GM10248 (cell line): ENCODE measurements at regions of chr14 and their contacts with region 1.

Region 1: DNA sequence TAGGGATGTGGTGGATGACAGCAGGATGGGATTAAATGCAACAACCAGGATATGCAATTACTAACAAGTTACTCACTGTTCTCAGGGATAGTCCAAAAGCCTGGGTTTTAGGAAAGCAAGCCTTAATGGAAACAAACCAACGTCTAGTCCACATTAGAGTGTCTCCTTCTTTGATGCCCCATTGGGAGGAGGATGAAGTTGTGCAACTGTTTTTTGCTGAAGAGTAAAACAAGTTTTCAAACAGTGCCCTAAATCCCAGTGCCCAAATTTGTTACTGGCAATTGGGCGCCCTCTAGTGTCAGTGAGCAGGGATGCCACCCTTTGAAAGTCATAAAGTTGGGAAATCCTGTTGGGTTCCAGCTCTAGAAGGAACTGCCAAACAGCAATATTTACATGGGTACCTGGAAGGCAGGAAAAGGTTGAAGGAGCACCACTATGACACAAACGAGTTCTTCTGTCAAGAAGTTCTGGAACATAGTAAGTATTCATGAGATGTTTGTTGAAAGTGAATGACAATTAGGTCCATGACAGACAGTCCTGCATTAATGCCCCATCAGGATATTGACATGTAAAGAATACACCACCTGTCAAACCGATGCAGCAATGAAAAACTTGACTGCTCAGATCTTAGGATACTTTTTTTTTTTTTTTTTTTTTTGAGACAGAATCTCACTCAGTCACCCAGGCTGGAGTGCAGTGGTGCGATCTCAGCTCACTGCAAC is 11.1 kb upstream of the DPF3 start:
- DNase-seq: peak; percentile 59
- CTCF ChIP-seq: peak; percentile 89

Region 2: DNA sequence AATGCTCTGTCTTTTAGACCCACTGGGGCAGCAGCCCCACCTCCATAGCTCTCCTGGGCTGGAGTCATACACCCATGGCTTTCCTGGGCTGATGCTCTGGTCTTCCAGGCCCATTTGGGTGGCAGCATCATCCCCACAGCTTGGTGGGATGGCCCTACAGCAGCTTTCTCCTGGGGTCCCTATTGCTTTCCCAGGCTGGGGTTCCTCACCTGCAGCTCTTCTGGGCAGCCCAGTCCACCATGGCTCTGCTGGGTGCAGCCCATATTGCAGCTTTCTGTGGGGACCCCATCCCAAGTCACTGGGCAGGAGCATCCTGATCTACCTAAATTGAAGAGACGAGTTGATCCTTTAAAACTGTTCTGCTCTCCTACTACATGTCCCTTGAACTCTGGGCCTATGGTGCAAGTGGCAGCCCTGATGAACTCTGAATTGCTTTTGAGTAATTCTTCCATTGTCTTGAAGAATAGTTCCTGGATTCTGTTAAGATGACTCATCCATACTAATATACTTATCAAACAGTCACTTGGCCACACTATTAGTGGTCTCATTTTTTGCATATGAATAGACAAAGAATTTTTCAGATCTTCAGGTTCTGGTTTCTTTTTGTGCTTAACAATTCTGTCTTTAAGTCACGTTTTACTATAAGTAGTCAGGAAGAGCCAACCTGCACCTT is 401.2 kb before region 1 on chr14:
- CTCF ChIA-PET with region 1: interaction called, 18 read pairs
- POLR2A ChIA-PET with region 1: no interaction called
- DNase-seq: no peak
- CTCF ChIP-seq: no peak

Region 3: GRCh38 chr14:72510566-72510965 is 394.4 kb before region 1 on chr14:
- CTCF ChIA-PET with region 1: interaction called, 295 read pairs
- POLR2A ChIA-PET with region 1: interaction called, 3 read pairs
- DNase-seq: no peak
- CTCF ChIP-seq: no peak

Region 4: GRCh38 chr14:72812292-72812911 is 92.6 kb before region 1 on chr14:
- CTCF ChIA-PET with region 1: no interaction called
- POLR2A ChIA-PET with region 1: no interaction called
- DNase-seq: no peak
- CTCF ChIP-seq: no peak

Region 5: GRCh38 chr14:72888636-72889201 is 16.3 kb before region 1 on chr14:
- CTCF ChIA-PET with region 1: interaction called, 53 read pairs
- POLR2A ChIA-PET with region 1: no interaction called
- DNase-seq: no peak
- CTCF ChIP-seq: no peak

Region 6: DNA sequence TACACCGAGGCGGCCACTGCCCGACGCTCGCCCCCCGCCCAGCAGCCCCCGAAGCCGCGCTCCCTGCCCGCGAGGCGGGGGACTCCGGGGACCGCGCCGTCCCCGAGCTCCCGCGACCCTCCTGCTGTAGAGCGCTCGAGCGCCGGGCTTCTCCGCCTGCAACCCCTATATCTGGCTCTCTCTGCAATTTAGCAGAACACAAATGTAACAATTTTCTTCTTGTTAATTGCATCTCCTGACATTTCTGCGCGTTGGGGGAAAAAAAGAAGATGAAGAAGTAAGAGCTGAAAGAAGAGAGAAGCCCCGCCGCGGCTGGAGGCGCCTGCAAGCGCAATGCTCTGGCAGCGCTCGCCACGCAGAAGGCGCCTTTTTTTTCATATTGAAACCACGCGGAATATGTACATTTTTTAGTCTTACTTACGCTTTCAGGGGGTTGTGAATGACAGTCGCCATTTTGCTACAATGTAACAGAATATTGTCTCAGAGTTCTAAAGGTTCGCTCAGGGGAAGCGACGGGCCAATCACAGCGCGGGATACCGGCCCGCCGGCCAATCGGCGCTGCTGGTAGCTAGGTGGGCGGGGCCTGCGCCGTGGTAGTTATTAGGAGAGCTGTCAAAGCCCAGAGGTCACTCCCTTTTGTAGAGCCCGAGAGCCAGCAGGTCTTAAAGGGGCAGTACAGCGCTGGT is 11.2 kb before region 1 on chr14 and contains the start of gene DPF3:
- CTCF ChIA-PET with region 1: interaction called, 53 read pairs
- POLR2A ChIA-PET with region 1: no interaction called
- DNase-seq: peak; percentile 96
- CTCF ChIP-seq: no peak

Region 7: GRCh38 chr14:72920015-72920414 is 15.0 kb after region 1 on chr14:
- CTCF ChIA-PET with region 1: interaction called, 18 read pairs
- POLR2A ChIA-PET with region 1: no interaction called
- DNase-seq: no peak
- CTCF ChIP-seq: no peak

Region 8: GRCh38 chr14:73209953-73210352 is 305.0 kb after region 1 on chr14:
- CTCF ChIA-PET with region 1: no interaction called
- POLR2A ChIA-PET with region 1: no interaction called
- DNase-seq: no peak
- CTCF ChIP-seq: no peak

Region 9: GRCh38 chr14:73227812-73228781 is 323.1 kb after region 1 on chr14:
- CTCF ChIA-PET with region 1: no interaction called
- POLR2A ChIA-PET with region 1: no interaction called
- DNase-seq: no peak
- CTCF ChIP-seq: no peak

Region 10: GRCh38 chr14:73452341-73453186 is 547.6 kb after region 1 on chr14:
- CTCF ChIA-PET with region 1: no interaction called
- POLR2A ChIA-PET with region 1: no interaction called
- DNase-seq: no peak
- CTCF ChIP-seq: no peak